ENCODE measurements at regions of chrX and their contacts with region 1.

Region 1: GRCh38 chrX:30875961-30876360 is 13.1 kb downstream of the TAB3 start:
- DNase-seq: no peak
- ATAC-seq: no peak
- H3K4me3 ChIP-seq: no peak overlapping the region
- H3K4me3 Mint-ChIP-seq: no peak overlapping the region
- H3K27ac ChIP-seq: no peak overlapping the region
- H3K27ac Mint-ChIP-seq: no peak overlapping the region
- H3K4me1 ChIP-seq: no peaks in the 10 kb centered on the region
- H3K4me1 Mint-ChIP-seq: peaks cover 32 to 56% (median 39%) of the 10 kb centered on the region in 3 donors
- H3K27me3 ChIP-seq: no peaks in the 10 kb centered on the region
- H3K27me3 Mint-ChIP-seq: no peaks in the 10 kb centered on the region

Region 2: DNA sequence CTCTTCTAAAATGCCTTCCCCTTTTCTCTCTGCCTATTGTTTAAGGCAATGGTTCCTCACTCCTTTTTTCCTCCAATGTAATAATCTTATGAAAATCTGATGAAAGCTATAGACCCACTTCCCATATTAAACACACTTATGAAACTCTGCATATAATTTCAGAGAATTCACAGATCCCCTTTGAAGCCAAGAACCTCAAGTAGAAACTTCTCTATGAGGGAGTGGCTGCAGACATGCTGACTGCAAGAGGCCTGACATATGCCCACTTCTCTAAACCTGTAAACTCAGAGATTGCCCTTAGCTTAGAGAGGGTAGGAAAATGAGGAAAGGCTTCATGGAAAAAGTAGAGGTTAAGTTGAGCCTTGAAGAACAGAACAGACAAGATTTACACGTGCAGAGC is 24.5 kb before region 1 on chrX:
- CTCF ChIA-PET with region 1: no interaction called
- POLR2A ChIA-PET with region 1: interaction called in 1 of 2 experiments, 14 read pairs
- DNase-seq: no peak
- ATAC-seq: no peak
- H3K4me3 ChIP-seq: no peak overlapping the region
- H3K4me3 Mint-ChIP-seq: no peak overlapping the region
- H3K27ac ChIP-seq: no peak overlapping the region
- H3K27ac Mint-ChIP-seq: no peak overlapping the region
- H3K4me1 ChIP-seq: no peaks in the 10 kb centered on the region
- H3K4me1 Mint-ChIP-seq: no peaks in the 10 kb centered on the region
- H3K27me3 ChIP-seq: no peaks in the 10 kb centered on the region
- H3K27me3 Mint-ChIP-seq: peaks cover 0 to 8% of the 10 kb centered on the region in 2 donors

Measured in T-cell (primary cell).